CD4-positive, alpha-beta memory T cell (primary cell): ENCODE measurements at regions of chr22 and their contacts with region 1.

Region 1: DNA sequence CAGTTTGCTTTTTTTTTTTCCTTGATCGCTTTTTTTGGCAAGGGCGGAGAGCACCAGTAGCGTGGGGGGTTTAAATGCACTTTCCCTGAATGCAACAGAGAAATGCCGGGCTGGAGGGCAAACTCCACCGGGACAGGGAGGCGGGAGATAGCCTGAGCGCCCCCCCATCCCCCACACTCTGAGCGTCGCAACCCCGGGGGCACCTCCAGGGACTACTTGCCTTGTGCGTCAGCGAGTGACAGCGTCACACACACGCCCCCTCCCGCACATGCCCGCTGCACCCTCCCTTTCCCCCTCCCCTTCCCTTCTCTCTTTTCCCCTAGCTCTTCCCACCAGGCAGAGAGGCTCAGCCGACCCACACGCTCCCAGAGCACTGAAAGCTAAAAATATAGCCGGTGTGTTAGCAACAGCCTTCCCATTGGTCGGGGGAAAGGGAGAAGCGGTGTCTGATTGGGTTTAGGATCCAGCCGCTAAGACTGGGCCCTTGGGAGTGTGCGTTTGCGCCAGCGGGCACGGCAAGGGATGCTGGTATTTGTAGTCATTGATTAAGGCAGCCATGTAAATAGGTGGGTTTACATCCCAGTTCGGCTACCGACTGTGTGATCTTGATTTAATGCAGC is 1.7 kb upstream of the TOB2 start:
- DNase-seq: peak; percentile 91 to 97 (median 93)
- H3K4me3 ChIP-seq: peak overlapping the region; percentile 71 to 94
- H3K4me3 Mint-ChIP-seq: peak overlapping the region; percentile 90 to 98 (median 96)
- H3K27ac ChIP-seq: peak overlapping the region; percentile 87
- H3K27ac Mint-ChIP-seq: peak overlapping the region; percentile 94 to 99 (median 98)
- H3K4me1 ChIP-seq: peaks cover 11% of the 10 kb centered on the region
- H3K4me1 Mint-ChIP-seq: peaks cover 12 to 46% (median 19%) of the 10 kb centered on the region in 4 donors
- H3K27me3 ChIP-seq: no peaks in the 10 kb centered on the region
- H3K27me3 Mint-ChIP-seq: peaks cover 0 to 2% of the 10 kb centered on the region in 2 donors

Region 2: DNA sequence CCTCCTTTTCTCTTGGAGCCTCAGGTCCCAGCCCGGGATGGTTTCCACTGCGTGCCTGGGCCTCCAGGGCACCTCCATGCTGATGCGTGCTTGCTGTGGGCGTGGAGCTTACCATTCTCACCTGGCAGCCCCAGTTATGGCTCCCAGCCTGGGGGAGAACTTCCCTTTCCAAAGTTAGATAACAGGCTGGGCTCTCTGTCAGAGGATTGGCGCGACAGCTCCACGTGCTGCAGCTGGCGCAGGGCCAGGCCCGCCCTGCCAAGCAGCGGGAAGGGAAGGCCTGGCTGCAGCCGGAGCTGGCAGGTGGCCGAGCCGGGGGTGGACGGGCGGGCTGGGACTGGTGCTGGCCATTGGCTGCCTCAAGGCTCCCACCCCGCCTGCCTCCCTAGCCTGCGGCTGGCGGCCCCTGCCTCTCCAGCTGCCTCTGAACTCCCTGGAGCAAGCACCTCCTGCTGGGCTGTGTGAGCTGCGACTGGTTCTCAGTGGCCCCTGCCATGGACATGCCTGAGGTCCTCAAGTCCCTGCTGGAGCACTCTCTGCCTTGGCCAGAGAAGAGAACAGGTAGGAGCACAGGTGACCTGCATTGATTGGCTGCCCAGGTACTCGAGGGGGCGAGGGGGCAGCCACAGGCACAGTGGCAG is 81.1 kb before region 1 on chr22:
- CTCF ChIA-PET with region 1: no interaction called
- POLR2A ChIA-PET with region 1: no interaction called
- intact Hi-C with region 1: no loop called
- DNase-seq: peak in 1 of 5 donors; percentile 7
- H3K4me3 ChIP-seq: no peak overlapping the region
- H3K4me3 Mint-ChIP-seq: peak overlapping the region in 2 of 8 donors; percentile 16 to 30
- H3K27ac ChIP-seq: no peak overlapping the region
- H3K27ac Mint-ChIP-seq: no peak overlapping the region
- H3K4me1 ChIP-seq: peaks cover 7% of the 10 kb centered on the region
- H3K4me1 Mint-ChIP-seq: peaks cover 0 to 9% (median 2%) of the 10 kb centered on the region in 4 donors
- H3K27me3 ChIP-seq: no peaks in the 10 kb centered on the region
- H3K27me3 Mint-ChIP-seq: peaks cover 0 to 2% of the 10 kb centered on the region in 2 donors

Region 3: DNA sequence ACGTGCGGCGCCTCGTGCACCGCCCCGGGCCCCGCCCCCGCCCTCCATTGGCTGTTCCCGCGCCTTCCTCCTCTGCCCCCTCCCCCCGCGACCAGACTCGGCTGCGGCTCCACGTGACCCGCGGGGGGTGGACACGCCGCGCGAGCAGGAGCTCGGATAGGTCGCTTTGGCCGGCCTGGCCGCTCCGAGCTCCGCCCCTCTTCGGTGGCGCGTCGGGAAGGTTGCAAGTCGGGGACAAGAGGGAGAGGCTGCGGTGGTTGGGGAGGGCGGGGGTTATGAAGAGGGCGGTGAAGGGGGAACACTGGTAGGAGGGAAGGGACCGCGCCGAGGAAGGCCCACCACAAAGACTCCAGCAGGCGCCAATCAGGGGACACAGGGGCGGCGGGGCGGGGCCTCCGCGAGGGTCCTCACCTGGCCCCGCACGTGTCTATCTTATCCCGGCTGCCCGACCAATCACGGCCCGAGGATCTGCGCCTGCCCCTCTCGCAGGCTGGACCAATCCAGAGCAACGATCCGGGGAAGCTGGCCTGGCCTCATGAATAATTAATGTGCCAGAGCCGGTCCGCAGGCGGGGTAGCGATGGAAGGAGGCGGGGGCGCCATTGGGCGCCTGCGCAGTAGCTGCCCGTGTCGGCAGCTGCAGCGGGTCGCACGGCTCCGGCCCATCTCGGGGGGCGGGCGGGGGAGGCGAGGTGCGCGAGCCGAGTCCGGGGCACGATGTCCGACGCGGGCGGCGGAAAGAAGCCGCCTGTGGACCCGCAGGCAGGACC is 66.8 kb before region 1 on chr22 and contains the start of gene TEF:
- CTCF ChIA-PET with region 1: no interaction called
- POLR2A ChIA-PET with region 1: interaction called, 33 read pairs
- intact Hi-C with region 1: loop called (anchors 1 kb)
- DNase-seq: peak; percentile 99
- H3K4me3 ChIP-seq: peak within 1 kb of the TSS; percentile 65 to 88
- H3K4me3 Mint-ChIP-seq: peak within 1 kb of the TSS; percentile 90 to 97 (median 94)
- H3K27ac ChIP-seq: peak within 1 kb of the TSS; percentile 87
- H3K27ac Mint-ChIP-seq: peak within 1 kb of the TSS; percentile 98 to 99 (median 98)
- H3K4me1 ChIP-seq: peaks cover 18% of the 10 kb centered on the region
- H3K4me1 Mint-ChIP-seq: peaks cover 12 to 36% (median 22%) of the 10 kb centered on the region in 4 donors
- H3K27me3 ChIP-seq: no peaks in the 10 kb centered on the region
- H3K27me3 Mint-ChIP-seq: no peaks in the 10 kb centered on the region
- total RNA-seq, gene TEF: 6.5 to 8.8 TPM

Region 4: GRCh38 chr22:41425660-41426365 is 22.5 kb before region 1 on chr22:
- CTCF ChIA-PET with region 1: no interaction called
- POLR2A ChIA-PET with region 1: interaction called, 20 read pairs
- intact Hi-C with region 1: no loop called
- DNase-seq: peak; percentile 26 to 65 (median 41)
- H3K4me3 ChIP-seq: no peak overlapping the region
- H3K4me3 Mint-ChIP-seq: peak overlapping the region in 6 of 8 donors; percentile 10 to 74 (median 40)
- H3K27ac ChIP-seq: peak overlapping the region; percentile 35
- H3K27ac Mint-ChIP-seq: peak overlapping the region; percentile 73 to 95 (median 92)
- H3K4me1 ChIP-seq: peaks cover 17% of the 10 kb centered on the region
- H3K4me1 Mint-ChIP-seq: peaks cover 10 to 17% (median 13%) of the 10 kb centered on the region in 4 donors
- H3K27me3 ChIP-seq: no peaks in the 10 kb centered on the region
- H3K27me3 Mint-ChIP-seq: no peaks in the 10 kb centered on the region

Region 5: GRCh38 chr22:41468381-41469217 is 20.3 kb after region 1 on chr22 and contains the starts of genes ACO2 and PHF5A:
- CTCF ChIA-PET with region 1: interaction called, 10 read pairs
- POLR2A ChIA-PET with region 1: interaction called, 261 read pairs
- intact Hi-C with region 1: loop called (anchors 1 kb)
- DNase-seq: peak; percentile 98
- H3K4me3 ChIP-seq: peak within 1 kb of the TSS; percentile 67 to 90
- H3K4me3 Mint-ChIP-seq: peak within 1 kb of the TSS; percentile 86 to 95 (median 92)
- H3K27ac ChIP-seq: peak within 1 kb of the TSS; percentile 89
- H3K27ac Mint-ChIP-seq: peak within 1 kb of the TSS; percentile 96 to 100 (median 99)
- H3K4me1 ChIP-seq: peaks cover 28% of the 10 kb centered on the region
- H3K4me1 Mint-ChIP-seq: peaks cover 29 to 56% (median 44%) of the 10 kb centered on the region in 4 donors
- H3K27me3 ChIP-seq: no peaks in the 10 kb centered on the region
- H3K27me3 Mint-ChIP-seq: no peaks in the 10 kb centered on the region
- total RNA-seq, gene ACO2: 64.8 to 65.0 TPM
- total RNA-seq, gene PHF5A: 37.7 to 39.2 TPM

Region 6: DNA sequence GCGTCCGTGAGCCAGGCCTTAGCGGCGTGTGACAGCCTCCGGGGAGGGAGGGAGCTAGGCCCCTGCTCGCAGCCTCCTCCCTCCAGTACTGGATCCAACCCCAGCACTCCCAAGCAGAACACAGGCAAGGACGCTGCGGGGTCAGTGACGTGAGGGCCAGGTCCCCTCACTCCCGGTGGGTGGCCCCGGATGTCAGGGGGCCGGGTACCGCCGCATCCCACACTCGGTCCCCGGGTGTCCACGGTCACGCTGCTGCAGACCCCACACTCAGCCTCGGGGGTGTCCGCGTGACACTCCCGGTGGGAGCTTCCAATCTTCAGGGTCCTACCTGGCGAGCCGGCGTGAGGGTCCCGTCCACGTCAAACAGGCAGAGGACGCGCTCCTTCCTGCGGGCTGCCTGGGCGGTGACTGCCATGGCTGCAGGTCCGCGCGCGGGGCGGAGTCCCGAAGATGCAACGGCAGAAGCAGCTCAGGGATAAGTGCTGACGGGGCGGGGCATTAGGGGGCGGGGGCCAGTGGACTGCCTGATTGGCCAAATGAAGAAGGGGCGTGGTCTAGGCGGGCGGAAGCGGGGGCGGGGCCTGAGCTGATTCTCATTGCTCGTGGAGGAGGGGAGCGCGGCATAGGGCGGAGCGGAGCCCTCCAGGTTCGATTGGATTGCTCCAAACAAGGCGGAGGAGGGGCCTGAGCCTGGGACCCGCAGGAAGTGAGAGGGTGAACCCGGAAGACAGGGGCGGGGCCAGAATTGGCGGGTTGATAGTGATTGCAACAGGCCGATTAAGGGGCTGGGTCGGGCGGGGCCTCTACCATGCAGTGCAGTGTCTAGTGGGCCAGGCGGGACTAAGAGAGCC is 141.3 kb after region 1 on chr22 and contains the start of gene PMM1:
- CTCF ChIA-PET with region 1: no interaction called
- POLR2A ChIA-PET with region 1: interaction called, 12 read pairs
- intact Hi-C with region 1: loop called (anchors 10 kb)
- DNase-seq: peak; percentile 100
- H3K4me3 ChIP-seq: peak within 1 kb of the TSS; percentile 84 to 89
- H3K4me3 Mint-ChIP-seq: peak within 1 kb of the TSS; percentile 92 to 97 (median 94)
- H3K27ac ChIP-seq: peak within 1 kb of the TSS; percentile 60
- H3K27ac Mint-ChIP-seq: peak within 1 kb of the TSS; percentile 38 to 94 (median 90)
- H3K4me1 ChIP-seq: peaks cover 10% of the 10 kb centered on the region
- H3K4me1 Mint-ChIP-seq: peaks cover 5 to 27% (median 17%) of the 10 kb centered on the region in 4 donors
- H3K27me3 ChIP-seq: no peaks in the 10 kb centered on the region
- H3K27me3 Mint-ChIP-seq: no peaks in the 10 kb centered on the region
- total RNA-seq, gene PMM1: 31.7 to 32.9 TPM

Region 7: DNA sequence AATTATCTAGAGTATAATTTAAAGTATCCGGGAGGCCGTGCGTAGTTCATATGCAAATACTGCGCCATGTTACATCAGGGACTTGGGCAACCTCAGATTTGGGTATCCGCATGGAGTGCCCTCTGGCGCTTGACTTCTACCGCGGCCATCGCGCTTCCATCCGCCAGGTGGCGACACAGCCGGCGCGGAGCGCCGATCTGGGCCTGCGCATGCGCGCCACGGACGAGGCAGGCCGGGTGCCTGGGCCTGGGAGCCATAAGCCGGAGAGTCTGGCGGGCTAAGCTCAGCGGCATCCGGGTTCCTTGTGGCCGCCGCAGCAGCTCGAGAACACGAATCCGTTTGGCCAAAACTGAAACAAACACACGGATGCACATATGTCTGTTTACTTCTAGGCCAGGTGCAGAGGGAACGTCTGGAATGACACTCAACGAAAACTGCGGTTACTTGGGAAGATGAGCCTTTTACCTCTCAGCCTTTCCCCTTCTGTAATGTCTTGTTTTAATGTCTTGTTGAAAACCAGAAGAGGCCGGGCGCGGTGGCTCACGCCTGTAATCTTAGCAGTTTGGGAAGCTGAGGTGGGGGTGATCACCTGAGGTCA is 218.5 kb after region 1 on chr22:
- CTCF ChIA-PET with region 1: interaction called, 4 read pairs
- POLR2A ChIA-PET with region 1: interaction called, 7 read pairs
- intact Hi-C with region 1: loop called (anchors 1 kb)
- DNase-seq: peak; percentile 91 to 97 (median 96)
- H3K4me3 ChIP-seq: peak overlapping the region in 1 of 2 donors; percentile 39
- H3K4me3 Mint-ChIP-seq: peak overlapping the region; percentile 86 to 94 (median 88)
- H3K27ac ChIP-seq: peak overlapping the region; percentile 80
- H3K27ac Mint-ChIP-seq: peak overlapping the region; percentile 97 to 99 (median 98)
- H3K4me1 ChIP-seq: peaks cover 14% of the 10 kb centered on the region
- H3K4me1 Mint-ChIP-seq: peaks cover 4 to 14% (median 11%) of the 10 kb centered on the region in 4 donors
- H3K27me3 ChIP-seq: no peaks in the 10 kb centered on the region
- H3K27me3 Mint-ChIP-seq: no peaks in the 10 kb centered on the region